ENCODE measurements at regions of chr4 and their contacts with region 1.

Region 1: DNA sequence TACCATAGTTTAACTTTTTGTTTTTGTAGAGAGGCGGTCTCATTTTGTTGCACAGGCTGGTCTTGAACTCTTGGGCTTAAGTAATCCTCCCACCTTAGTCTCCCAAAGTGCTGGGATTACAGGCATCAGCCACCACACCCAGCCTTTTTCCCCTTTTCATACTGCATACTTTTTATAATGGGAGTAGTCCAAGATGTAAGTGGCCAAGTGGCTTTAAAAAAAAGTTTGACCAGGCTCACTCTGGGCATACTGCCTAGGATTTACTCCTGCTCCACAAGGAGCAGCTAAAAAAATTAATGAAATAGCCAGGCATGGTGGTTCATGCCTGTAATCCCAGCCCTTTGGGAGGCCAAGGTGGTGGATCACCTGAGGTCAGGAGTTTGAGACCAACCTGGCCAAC is 6.0 kb downstream of the GRSF1 start:
- DNase-seq: no peak
- ATAC-seq: peak in 1 of 4 donors; percentile 35
- H3K4me3 ChIP-seq: no peak overlapping the region
- H3K27ac ChIP-seq: no peak overlapping the region
- H3K4me1 ChIP-seq: peaks cover 0 to 33% (median 19%) of the 10 kb centered on the region in 12 donors
- H3K27me3 ChIP-seq: no peaks in the 10 kb centered on the region
- CTCF ChIP-seq: no peak
- POLR2A ChIP-seq: no peak

Region 2: DNA sequence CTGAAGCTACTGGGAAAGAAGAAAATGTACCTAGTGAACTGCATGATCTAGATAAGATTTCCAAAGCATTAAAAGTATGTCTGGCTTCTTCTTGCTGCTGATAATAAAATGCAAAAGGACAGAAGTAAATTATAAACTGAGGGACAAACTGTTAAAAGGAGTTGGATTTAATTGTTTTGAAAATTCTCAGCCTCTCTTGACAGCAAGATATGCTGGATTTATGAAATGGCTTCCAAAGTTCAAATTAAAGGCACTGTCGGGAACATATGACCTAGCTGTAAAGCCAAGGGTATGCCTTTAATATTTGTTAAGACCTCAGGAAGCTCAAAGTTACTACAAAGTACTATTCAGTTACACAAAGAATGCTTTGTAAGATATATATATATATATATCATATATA is 545.0 kb before region 1 on chr4:
- intact Hi-C with region 1: no loop called
- DNase-seq: no peak
- ATAC-seq: no peak
- H3K4me3 ChIP-seq: no peak overlapping the region
- H3K27ac ChIP-seq: no peak overlapping the region
- H3K4me1 ChIP-seq: no peaks in the 10 kb centered on the region
- H3K27me3 ChIP-seq: no peaks in the 10 kb centered on the region
- CTCF ChIP-seq: no peak
- POLR2A ChIP-seq: no peak

Region 3: DNA sequence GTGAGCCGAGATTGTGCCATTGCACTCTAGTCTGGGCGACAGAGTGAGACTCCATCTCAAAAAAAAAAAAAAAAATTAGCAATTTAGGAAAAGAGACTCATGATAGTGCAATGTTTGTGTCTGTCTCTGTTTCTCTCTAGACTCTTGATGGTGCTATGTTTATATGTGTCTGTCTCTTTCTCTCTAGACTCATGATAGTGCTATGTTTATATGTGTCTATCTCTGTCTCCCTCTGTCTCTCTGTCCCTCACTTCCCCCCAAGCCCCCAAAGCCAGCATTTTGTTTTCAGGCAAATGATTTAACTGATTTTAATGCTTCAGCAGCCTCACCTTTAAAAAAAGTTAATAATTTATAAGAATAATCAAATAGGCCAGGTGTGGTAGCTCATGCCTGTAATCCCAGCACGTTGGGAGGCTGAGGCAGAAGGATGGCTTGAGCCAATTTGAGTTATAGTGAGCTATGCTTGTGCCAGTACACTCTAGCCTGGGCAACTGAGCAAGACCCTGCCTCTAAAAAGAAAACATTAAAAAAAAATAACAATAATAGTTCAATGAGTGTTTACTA is 75.4 kb after region 1 on chr4:
- intact Hi-C with region 1: loop called in 3 of 10 experiments (anchors 5 kb)
- DNase-seq: no peak
- ATAC-seq: no peak
- H3K4me3 ChIP-seq: no peak overlapping the region
- H3K27ac ChIP-seq: no peak overlapping the region
- H3K4me1 ChIP-seq: peaks cover 0 to 9% (median under 1%) of the 10 kb centered on the region in 12 donors
- H3K27me3 ChIP-seq: no peaks in the 10 kb centered on the region
- CTCF ChIP-seq: no peak
- POLR2A ChIP-seq: no peak

Measured in heart left ventricle (tissue), 16 donors.